PC-9 (cell line): ENCODE measurements at regions of chr7 and their contacts with region 1.

Region 1: GRCh38 chr7:5494683-5495561 is 71.3 kb upstream of the TNRC18 start:
- DNase-seq: peak; percentile 84 to 95
- H3K4me3 ChIP-seq: peak overlapping the region; percentile 22; the same call in 1 of the 2 replicates
- H3K27ac ChIP-seq: peak overlapping the region; percentile 63
- H3K4me1 ChIP-seq: peaks cover 19% of the 10 kb centered on the region
- H3K27me3 ChIP-seq: no peaks in the 10 kb centered on the region
- CTCF ChIP-seq: peak; percentile 98

Region 2: DNA sequence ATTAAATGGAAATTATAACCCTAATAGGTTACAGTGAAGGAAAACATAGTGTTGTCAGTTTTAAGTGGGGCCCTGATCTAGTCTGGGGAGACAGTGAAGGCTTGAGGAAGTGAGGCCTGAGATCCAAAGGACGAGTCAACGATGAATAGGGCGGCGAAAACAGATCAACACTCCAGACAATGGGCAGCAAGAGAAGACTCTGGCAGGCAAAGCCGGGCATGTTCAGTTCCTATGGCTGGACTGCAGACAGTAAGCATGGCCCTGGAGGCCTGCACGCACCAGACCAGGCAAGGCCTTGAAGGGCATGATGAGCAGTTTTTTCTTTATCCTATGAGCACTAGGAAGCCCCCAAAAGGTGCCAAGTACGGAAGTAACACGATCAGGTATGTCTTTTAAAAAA is 158.7 kb after region 1 on chr7:
- CTCF ChIA-PET with region 1: no interaction called
- POLR2A ChIA-PET with region 1: no interaction called
- intact Hi-C with region 1: no loop called
- DNase-seq: no peak
- H3K4me3 ChIP-seq: no peak overlapping the region
- H3K27ac ChIP-seq: no peak overlapping the region
- H3K4me1 ChIP-seq: no peaks in the 10 kb centered on the region
- H3K27me3 ChIP-seq: no peaks in the 10 kb centered on the region
- CTCF ChIP-seq: no peak

Region 3: GRCh38 chr7:5704534-5704922 is 209.6 kb after region 1 on chr7:
- CTCF ChIA-PET with region 1: interaction called, 12 read pairs
- POLR2A ChIA-PET with region 1: no interaction called
- intact Hi-C with region 1: loop called (anchors 1 kb)
- DNase-seq: peak; percentile 66 to 76
- H3K4me3 ChIP-seq: no peak overlapping the region
- H3K27ac ChIP-seq: no peak overlapping the region
- H3K4me1 ChIP-seq: peaks cover 8% of the 10 kb centered on the region
- H3K27me3 ChIP-seq: no peaks in the 10 kb centered on the region
- CTCF ChIP-seq: peak; percentile 95